WTC11 (cell line): ENCODE measurements at regions of chr20 and their contacts with region 1.

Region 1: DNA sequence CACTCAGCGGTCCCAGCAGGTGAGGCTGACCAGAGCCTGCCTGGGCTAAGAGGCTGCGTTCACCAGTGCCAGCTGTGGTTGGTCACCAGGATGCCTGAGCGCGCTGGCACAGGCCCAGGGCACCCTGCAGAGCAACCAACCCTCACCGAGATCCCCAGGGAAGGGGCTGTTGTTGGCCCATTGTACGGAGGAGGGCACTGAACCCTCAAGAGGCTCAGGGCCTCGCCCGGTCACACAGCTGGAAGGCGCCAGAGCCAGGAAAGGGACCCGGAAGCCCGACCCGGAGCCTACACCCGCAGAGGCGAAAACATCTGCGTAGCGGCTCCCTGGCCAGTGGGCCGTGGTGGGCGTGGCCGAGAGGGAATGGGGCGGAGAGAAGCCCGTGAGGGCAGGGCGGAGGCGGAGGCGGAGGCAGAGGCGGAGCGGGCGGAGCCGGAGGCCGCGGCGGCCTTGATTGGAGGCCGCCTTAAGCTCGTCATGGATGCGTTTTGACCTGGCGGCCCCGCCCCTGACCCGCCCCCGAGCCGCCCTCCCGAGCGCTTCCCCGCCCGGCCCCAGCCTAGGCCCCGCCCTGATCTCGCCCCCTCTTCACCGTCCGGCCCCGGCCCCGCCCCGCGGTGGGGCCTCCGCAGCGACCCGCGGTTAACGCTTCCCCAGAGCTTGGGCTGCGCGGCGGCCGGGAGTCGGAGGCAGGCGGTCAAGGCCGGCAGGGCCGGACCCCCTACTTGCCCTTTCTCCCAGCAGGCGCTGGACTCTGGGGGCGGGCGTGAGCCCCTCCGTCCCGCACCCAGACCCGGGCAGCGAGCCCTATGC is 2.2 kb upstream of the MRGBP start:
- DNase-seq: peak; percentile 98
- ATAC-seq: peak; percentile 83
- H3K4me3 Mint-ChIP-seq: peak overlapping the region; percentile 79
- H3K27ac Mint-ChIP-seq: no peak overlapping the region
- H3K4me1 Mint-ChIP-seq: peaks cover 16% of the 10 kb centered on the region
- H3K27me3 Mint-ChIP-seq: peaks cover 19% of the 10 kb centered on the region
- CTCF ChIP-seq: no peak

Region 2: DNA sequence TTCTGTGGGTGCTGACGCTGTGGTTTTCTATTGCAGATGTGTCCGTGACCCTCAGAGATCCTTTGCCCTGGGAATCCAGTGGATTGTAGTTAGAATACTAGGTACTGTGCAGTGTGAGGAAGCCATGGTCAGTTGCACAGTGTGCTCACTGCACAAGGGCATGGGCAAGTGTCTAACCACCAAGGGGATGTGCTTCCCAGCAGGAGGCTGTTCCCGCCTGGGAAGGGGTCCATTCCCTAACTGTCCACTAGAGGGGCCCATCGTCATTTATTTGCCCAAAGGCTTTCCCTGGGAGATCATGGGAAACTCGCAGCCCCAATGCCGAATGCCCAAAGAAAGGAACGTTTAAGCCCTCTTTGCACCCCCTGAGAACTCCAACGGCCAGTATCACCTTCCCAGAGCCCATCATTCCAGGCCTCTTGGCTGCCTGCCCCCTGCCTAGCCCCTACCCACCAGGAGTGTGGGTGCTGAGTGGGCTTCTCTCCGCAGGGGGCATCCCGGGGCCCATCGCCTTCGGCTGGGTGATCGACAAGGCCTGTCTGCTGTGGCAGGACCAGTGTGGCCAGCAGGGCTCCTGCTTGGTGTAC is 125.6 kb before region 1 on chr20:
- CTCF ChIA-PET with region 1: interaction called, 26 read pairs
- POLR2A ChIA-PET with region 1: no interaction called
- DNase-seq: peak; percentile 84
- ATAC-seq: peak; percentile 68
- H3K4me3 Mint-ChIP-seq: no peak overlapping the region
- H3K27ac Mint-ChIP-seq: no peak overlapping the region
- H3K4me1 Mint-ChIP-seq: no peaks in the 10 kb centered on the region
- H3K27me3 Mint-ChIP-seq: no peaks in the 10 kb centered on the region
- CTCF ChIP-seq: peak; percentile 84

Region 3: DNA sequence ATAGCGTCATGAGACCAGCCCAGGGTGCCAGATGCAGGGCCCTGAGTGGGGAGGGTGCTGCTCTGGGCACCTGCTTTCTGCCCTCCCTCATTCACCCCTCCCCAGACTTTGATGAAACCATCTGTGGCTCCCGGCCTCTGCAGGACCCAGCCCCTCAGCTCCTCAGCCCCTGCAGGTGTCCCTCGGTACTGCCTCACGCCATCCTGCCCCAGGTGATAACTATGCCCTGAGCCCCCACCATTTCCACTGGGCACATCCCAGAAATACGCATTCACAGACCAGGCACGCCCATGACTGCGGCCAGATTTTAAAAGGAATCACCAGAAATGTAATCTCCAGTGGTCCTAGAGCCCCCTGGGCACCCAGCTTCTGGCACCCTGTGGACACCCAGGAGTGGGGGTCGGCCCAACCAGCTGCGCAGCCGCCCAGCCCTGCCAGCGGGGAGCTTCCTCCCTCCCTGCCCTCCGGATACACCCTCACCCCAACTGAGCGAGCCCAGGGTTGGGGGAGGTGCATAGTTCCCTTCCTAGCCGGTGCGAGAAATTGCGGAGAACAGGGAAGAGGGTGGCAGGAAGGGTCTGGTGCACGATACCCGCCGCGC is 86.1 kb before region 1 on chr20:
- CTCF ChIA-PET with region 1: interaction called, 38 read pairs
- POLR2A ChIA-PET with region 1: no interaction called
- DNase-seq: peak; percentile 83
- ATAC-seq: peak; percentile 82
- H3K4me3 Mint-ChIP-seq: peak overlapping the region; percentile 77
- H3K27ac Mint-ChIP-seq: no peak overlapping the region
- H3K4me1 Mint-ChIP-seq: 0 out of 2 replicates have a peak, but pooled peaks cover 3% of the 10 kb centered on the region
- H3K27me3 Mint-ChIP-seq: peaks cover 32% of the 10 kb centered on the region
- CTCF ChIP-seq: peak; percentile 53; the same call in 1 of the 2 replicates

Region 4: GRCh38 chr20:62772990-62773844 is 20.9 kb before region 1 on chr20:
- CTCF ChIA-PET with region 1: interaction called, 22 read pairs
- POLR2A ChIA-PET with region 1: no interaction called
- DNase-seq: no peak
- ATAC-seq: no peak
- H3K4me3 Mint-ChIP-seq: no peak overlapping the region
- H3K27ac Mint-ChIP-seq: peak overlapping the region; percentile 62; the same call in 1 of the 2 replicates
- H3K4me1 Mint-ChIP-seq: peaks cover 10% of the 10 kb centered on the region
- H3K27me3 Mint-ChIP-seq: no peaks in the 10 kb centered on the region
- CTCF ChIP-seq: no peak

Region 5: GRCh38 chr20:62815066-62815991 is 21.2 kb after region 1 on chr20:
- CTCF ChIA-PET with region 1: interaction called, 16 read pairs
- POLR2A ChIA-PET with region 1: interaction called, 4 read pairs
- DNase-seq: peak; percentile 65
- ATAC-seq: peak; percentile 71
- H3K4me3 Mint-ChIP-seq: peak overlapping the region; percentile 65
- H3K27ac Mint-ChIP-seq: peak overlapping the region; percentile 76
- H3K4me1 Mint-ChIP-seq: peaks cover 14% of the 10 kb centered on the region
- H3K27me3 Mint-ChIP-seq: no peaks in the 10 kb centered on the region; the same call in 1 of the 2 replicates
- CTCF ChIP-seq: no peak